IMR-90 (cell line): ENCODE measurements at regions of chr14 and their contacts with region 1.

Region 1: DNA sequence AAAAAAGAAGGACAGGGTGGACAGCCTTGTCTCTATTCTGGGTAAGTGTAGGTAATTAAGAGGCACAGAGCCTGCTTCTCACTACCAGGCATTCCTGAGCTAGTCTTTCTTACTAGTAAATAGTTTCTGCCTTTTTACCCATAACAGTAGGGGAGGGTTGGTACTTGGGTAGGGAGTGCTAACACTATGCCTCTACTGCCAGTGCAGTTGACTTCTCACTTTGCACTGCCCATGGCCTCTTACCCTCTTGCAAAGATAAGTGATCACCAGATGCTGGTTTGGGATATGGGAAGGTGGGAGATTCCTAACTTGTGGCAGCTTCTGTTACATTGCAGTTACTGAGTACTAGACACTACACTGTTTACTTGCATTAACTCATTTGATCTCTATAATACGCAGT is 11.6 kb downstream of the AHSA1 start:
- DNase-seq: no peak
- ATAC-seq: no peak
- H3K4me3 ChIP-seq: no peak overlapping the region
- H3K27ac ChIP-seq: no peak overlapping the region
- H3K4me1 ChIP-seq: no peaks in the 10 kb centered on the region
- H3K27me3 ChIP-seq: peaks cover 10% of the 10 kb centered on the region
- CTCF ChIP-seq: no peak
- POLR2A ChIP-seq: no peak
- RAD21 ChIP-seq: no peak

Region 2: GRCh38 chr14:77400219-77400618 is 69.3 kb before region 1 on chr14:
- CTCF ChIA-PET with region 1: no interaction called
- POLR2A ChIA-PET with region 1: interaction called, 16 read pairs
- dilution Hi-C with region 1: no loop called
- in situ Hi-C with region 1: no loop called
- intact Hi-C with region 1: no loop called
- DNase-seq: no peak
- ATAC-seq: no peak
- H3K4me3 ChIP-seq: no peak overlapping the region
- H3K27ac ChIP-seq: no peak overlapping the region
- H3K4me1 ChIP-seq: no peaks in the 10 kb centered on the region
- H3K27me3 ChIP-seq: peaks cover 4% of the 10 kb centered on the region; the same call in 1 of the 2 replicates
- CTCF ChIP-seq: no peak
- POLR2A ChIP-seq: no peak
- RAD21 ChIP-seq: no peak

Region 3: DNA sequence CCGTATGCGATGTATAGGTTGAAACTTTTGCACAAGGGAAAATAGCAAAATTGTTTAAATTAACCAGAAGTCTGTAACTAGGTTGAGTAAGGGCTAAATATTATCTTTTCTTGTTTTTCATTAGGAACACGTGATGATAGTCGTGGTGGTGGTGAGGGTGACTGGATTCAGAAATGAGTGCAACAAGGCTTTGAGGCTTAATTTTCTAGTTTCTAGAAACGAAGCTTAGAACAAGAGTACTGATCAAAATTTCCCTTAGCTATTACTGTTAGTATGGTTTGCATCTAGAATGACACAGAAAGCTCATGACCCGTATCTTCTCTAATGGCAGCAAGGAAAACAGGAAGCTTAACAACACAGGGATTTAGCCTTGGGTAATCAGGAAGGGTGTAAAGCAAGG is 245.4 kb after region 1 on chr14:
- CTCF ChIA-PET with region 1: no interaction called
- POLR2A ChIA-PET with region 1: no interaction called
- dilution Hi-C with region 1: no loop called
- in situ Hi-C with region 1: loop called (anchors 10 kb)
- intact Hi-C with region 1: no loop called
- DNase-seq: no peak
- ATAC-seq: no peak
- H3K4me3 ChIP-seq: no peak overlapping the region
- H3K27ac ChIP-seq: no peak overlapping the region
- H3K4me1 ChIP-seq: no peaks in the 10 kb centered on the region
- H3K27me3 ChIP-seq: no peaks in the 10 kb centered on the region
- CTCF ChIP-seq: no peak
- POLR2A ChIP-seq: no peak
- RAD21 ChIP-seq: no peak